H1 (cell line): ENCODE measurements at regions of chr15 and their contacts with region 1.

Region 1: DNA sequence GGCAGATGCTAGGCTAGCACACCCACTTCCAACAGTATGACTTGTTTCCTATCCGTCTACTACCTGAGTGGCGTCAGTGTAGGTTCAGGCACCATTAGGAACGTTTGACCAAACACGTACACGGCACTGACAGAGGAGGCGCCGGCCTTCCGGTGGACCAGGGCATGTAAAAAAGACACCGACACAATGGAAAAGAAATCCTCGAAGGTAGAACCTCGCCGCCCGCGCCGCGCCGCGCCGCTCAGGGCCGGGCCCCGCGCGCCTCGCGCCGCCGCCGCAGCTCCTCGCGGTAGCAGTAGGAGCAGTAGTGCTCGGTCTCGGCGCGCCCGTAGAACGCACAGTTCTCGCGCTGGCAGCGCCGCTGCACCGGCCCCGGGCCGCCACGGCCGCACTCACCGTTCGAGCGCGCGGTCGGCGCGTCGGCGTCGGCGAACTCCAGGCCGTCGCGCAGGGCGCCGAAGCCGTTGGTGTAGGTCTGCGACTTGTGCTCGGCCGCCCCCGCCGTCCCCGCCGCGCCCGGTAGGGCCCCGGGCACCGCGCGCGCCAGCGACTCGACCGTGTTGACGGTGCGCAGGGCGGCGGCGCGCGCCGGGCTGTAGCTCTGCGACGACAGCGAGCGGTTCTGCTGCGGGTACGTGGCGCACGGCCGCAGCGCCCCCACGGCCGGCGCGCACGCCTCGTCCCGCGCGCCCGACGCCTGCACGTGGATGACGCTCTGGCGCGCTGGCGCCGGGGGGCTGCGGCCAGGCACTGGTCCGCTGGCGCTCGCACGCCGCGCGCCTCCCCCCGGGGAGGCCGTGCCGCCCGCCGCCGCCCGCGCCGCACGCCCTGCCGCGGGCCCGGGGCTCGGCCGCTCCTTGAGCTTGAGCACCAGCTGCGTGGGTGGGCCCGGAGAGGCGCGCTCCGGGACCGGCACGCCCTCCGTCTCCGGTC is 156.7 kb downstream of the KLF13 start:
- DNase-seq: peak in 1 of 2 experiments; percentile 69
- H3K4me3 ChIP-seq: peak overlapping the region; percentile 7 to 48 (median 25)
- H3K27ac ChIP-seq: no peak overlapping the region
- H3K4me1 ChIP-seq: peaks cover 0 to 5% (median 0%) of the 10 kb centered on the region in 4 experiments; a peak in 4 of 7 replicates
- H3K27me3 ChIP-seq: peaks cover 32 to 39% (median 37%) of the 10 kb centered on the region in 4 experiments
- CTCF ChIP-seq: no peak
- EP300 ChIP-seq: no peak
- POLR2A ChIP-seq: no peak
- RAD21 ChIP-seq: no peak

Region 2: GRCh38 chr15:31472636-31473384 is 10.5 kb before region 1 on chr15:
- CTCF ChIA-PET with region 1: interaction called, 105 read pairs
- POLR2A ChIA-PET with region 1: no interaction called
- DNase-seq: no peak
- H3K4me3 ChIP-seq: no peak overlapping the region
- H3K27ac ChIP-seq: no peak overlapping the region
- H3K4me1 ChIP-seq: peaks cover 0 to 5% (median 0%) of the 10 kb centered on the region in 4 experiments; a peak in 1 of 7 replicates
- H3K27me3 ChIP-seq: no peaks in the 10 kb centered on the region; a peak in 1 of 7 replicates
- CTCF ChIP-seq: no peak
- EP300 ChIP-seq: no peak
- POLR2A ChIP-seq: no peak
- RAD21 ChIP-seq: no peak